ENCODE measurements at regions of chr6 and their contacts with region 1.

Region 1: DNA sequence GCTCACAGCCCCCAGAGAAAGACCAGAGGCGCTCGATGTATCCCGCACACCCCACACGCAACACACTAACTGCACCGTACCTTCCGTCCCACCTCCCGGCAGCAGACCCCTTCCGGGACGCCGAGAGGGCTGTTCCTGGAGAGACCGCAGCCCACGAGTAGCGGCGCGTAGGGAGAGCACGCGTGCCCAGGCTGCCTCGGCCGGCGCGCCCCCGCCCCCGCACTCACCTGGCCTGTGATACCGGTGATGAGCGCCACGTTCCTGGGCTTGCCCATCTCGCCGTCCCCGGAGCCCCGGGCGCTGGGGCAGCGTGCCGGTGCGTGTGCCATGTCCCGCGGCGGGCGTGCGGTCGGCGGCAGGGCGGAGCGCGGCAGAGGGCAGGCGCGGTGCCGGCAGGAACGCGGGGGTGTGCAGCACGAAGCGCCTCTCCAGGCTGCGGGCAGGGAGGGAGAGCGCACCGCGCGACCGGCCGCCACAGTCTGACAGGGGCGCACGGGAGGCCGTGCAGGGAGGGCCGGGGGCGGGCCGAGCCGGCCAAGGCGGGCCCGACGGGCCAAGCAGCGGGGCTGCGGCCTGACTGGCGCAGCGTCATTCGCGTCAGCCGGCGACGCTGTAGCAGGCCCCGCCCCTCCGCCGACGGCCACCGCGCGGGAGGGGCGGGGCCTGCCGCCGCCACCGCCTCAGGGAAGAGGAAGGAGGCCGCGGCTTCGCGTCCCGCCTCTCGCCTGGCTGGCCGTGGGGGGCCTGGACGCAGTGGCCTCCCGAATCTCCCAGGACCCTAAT is at the start of gene GMDS:
- DNase-seq: peak; percentile 67 to 86 (median 79)
- ATAC-seq: peak; percentile 98
- H3K4me3 ChIP-seq: peak within 1 kb of the TSS; percentile 90
- H3K4me3 Mint-ChIP-seq: peak within 1 kb of the TSS; percentile 86 to 97 (median 93)
- H3K27ac ChIP-seq: peak within 1 kb of the TSS; percentile 96
- H3K27ac Mint-ChIP-seq: peak within 1 kb of the TSS; percentile 84 to 98 (median 95)
- H3K4me1 ChIP-seq: peaks cover 15 to 18% of the 10 kb centered on the region in 2 donors
- H3K4me1 Mint-ChIP-seq: peaks cover 41 to 77% (median 61%) of the 10 kb centered on the region in 7 donors
- H3K27me3 ChIP-seq: no peaks in the 10 kb centered on the region
- H3K27me3 Mint-ChIP-seq: no peaks in the 10 kb centered on the region
- total RNA-seq, gene GMDS: 12.7 to 33.9 (median 18.3) TPM

Region 2: DNA sequence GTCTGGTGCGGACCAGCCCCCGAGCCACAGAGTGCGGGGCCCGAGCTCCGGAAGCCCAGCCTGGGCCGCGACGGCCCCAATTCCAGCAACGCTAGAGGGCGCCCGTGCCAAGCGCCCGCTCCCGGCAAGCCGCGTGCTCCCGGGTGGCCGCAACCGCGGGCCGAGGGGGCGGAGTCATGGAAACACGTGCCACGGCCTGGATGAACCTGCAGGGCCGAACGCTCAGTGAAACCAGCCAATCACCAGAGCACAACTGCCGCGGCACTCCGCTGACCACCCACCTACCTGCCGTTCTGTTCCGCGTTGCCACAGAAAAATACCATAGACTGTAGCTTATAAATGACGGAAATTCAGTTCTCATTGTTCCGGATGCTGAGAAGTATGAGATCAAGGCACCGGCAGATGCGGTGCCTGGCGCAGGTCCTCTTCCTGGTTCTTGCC is 721.2 kb before region 1 on chr6:
- CTCF ChIA-PET with region 1: no interaction called
- POLR2A ChIA-PET with region 1: no interaction called
- intact Hi-C with region 1: loop called in 1 of 2 experiments (anchors 2 kb)
- DNase-seq: peak; percentile 58 to 82 (median 75)
- ATAC-seq: peak; percentile 89
- H3K4me3 ChIP-seq: peak overlapping the region; percentile 60
- H3K4me3 Mint-ChIP-seq: peak overlapping the region; percentile 64 to 87 (median 79)
- H3K27ac ChIP-seq: no peak overlapping the region
- H3K27ac Mint-ChIP-seq: peak overlapping the region; percentile 51 to 93 (median 90)
- H3K4me1 ChIP-seq: peaks cover 19 to 50% of the 10 kb centered on the region in 2 donors
- H3K4me1 Mint-ChIP-seq: peaks cover 35 to 58% (median 48%) of the 10 kb centered on the region in 7 donors
- H3K27me3 ChIP-seq: no peaks in the 10 kb centered on the region
- H3K27me3 Mint-ChIP-seq: peaks cover 0 to 16% (median 4%) of the 10 kb centered on the region in 5 donors

Region 3: GRCh38 chr6:2221726-2222274 is 23.5 kb before region 1 on chr6:
- CTCF ChIA-PET with region 1: no interaction called
- POLR2A ChIA-PET with region 1: no interaction called
- intact Hi-C with region 1: loop called in 1 of 2 experiments (anchors 2 kb)
- DNase-seq: no peak
- ATAC-seq: peak; percentile 29
- H3K4me3 ChIP-seq: peak overlapping the region; percentile 53
- H3K4me3 Mint-ChIP-seq: peak overlapping the region; percentile 75 to 95 (median 88)
- H3K27ac ChIP-seq: peak overlapping the region; percentile 66
- H3K27ac Mint-ChIP-seq: peak overlapping the region; percentile 45 to 87 (median 84)
- H3K4me1 ChIP-seq: peaks cover 3 to 5% of the 10 kb centered on the region in 2 donors
- H3K4me1 Mint-ChIP-seq: peaks cover 19 to 41% (median 31%) of the 10 kb centered on the region in 7 donors
- H3K27me3 ChIP-seq: no peaks in the 10 kb centered on the region
- H3K27me3 Mint-ChIP-seq: no peaks in the 10 kb centered on the region

Region 4: GRCh38 chr6:3052481-3053230 is 807.4 kb after region 1 on chr6:
- CTCF ChIA-PET with region 1: no interaction called
- POLR2A ChIA-PET with region 1: no interaction called
- intact Hi-C with region 1: loop called in 1 of 2 experiments (anchors 10 kb)
- DNase-seq: no peak
- ATAC-seq: no peak
- H3K4me3 ChIP-seq: peak overlapping the region; percentile 64
- H3K4me3 Mint-ChIP-seq: peak overlapping the region; percentile 70 to 83 (median 76)
- H3K27ac ChIP-seq: no peak overlapping the region
- H3K27ac Mint-ChIP-seq: peak overlapping the region; percentile 52 to 84 (median 69)
- H3K4me1 ChIP-seq: peaks cover 5% of the 10 kb centered on the region in 2 donors
- H3K4me1 Mint-ChIP-seq: peaks cover 7 to 36% (median 17%) of the 10 kb centered on the region in 7 donors
- H3K27me3 ChIP-seq: no peaks in the 10 kb centered on the region
- H3K27me3 Mint-ChIP-seq: peaks cover 0 to 23% (median 0%) of the 10 kb centered on the region in 5 donors

Region 5: GRCh38 chr6:3258720-3259490 is 1013.6 kb after region 1 on chr6 and contains the start of gene PSMG4:
- CTCF ChIA-PET with region 1: no interaction called
- POLR2A ChIA-PET with region 1: no interaction called
- intact Hi-C with region 1: loop called in 1 of 2 experiments (anchors 10 kb)
- DNase-seq: peak; percentile 81 to 98 (median 89)
- ATAC-seq: peak; percentile 97
- H3K4me3 ChIP-seq: peak within 1 kb of the TSS; percentile 85
- H3K4me3 Mint-ChIP-seq: peak within 1 kb of the TSS; percentile 85 to 99 (median 97)
- H3K27ac ChIP-seq: peak within 1 kb of the TSS; percentile 80
- H3K27ac Mint-ChIP-seq: peak within 1 kb of the TSS; percentile 84 to 98 (median 92)
- H3K4me1 ChIP-seq: peaks cover 19 to 26% of the 10 kb centered on the region in 2 donors
- H3K4me1 Mint-ChIP-seq: peaks cover 28 to 45% (median 42%) of the 10 kb centered on the region in 7 donors
- H3K27me3 ChIP-seq: no peaks in the 10 kb centered on the region
- H3K27me3 Mint-ChIP-seq: peaks cover 0 to 25% (median 0%) of the 10 kb centered on the region in 5 donors
- total RNA-seq, gene PSMG4: 15.6 to 45.0 (median 27.7) TPM